ENCODE measurements at regions of chr1 and their contacts with region 1.

Region 1: DNA sequence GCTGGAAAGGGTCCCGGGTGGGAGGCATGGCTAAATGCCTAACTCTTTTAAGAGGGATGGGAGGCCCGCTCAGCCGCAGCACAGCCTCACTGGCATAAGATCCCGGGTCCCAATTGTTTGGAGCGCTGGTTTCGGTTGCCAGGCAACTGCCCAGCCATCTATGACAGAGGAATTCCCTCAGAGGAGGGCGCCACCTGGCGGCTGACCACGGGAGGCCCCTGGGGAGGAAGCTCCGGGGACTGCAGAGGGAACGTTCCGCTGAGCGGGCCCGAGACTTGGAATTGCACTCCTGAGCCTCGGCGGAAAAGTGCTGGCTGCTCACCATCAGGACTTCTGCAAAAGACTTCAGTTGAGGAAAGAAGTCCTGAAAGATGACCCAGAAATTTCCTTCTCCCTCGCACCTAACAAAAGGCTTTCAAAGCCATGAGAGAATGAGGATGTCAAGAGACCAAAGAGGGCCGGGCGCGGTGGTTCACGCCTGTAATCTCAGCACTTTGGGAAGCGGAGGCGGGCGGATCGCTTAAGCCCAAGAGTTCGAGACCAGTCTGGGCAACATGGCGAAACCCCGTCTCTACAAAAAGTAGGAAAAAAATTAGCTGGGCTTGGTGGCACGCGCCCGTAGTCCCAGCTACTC is 1.1 kb upstream of the ELAPOR1 start:
- DNase-seq: peak; percentile 96 to 99
- ATAC-seq: peak; percentile 95
- H3K4me3 ChIP-seq: no peak overlapping the region
- H3K27ac ChIP-seq: no peak overlapping the region
- H3K4me1 ChIP-seq: no peaks in the 10 kb centered on the region
- H3K27me3 ChIP-seq: no peaks in the 10 kb centered on the region

Region 2: GRCh38 chr1:108963052-108963686 is 149.6 kb before region 1 on chr1 and contains the start of gene CLCC1:
- intact Hi-C with region 1: loop called in 1 of 2 experiments (anchors 10 kb)
- DNase-seq: peak; percentile 96
- ATAC-seq: peak; percentile 98
- H3K4me3 ChIP-seq: peak within 1 kb of the TSS; percentile 66 to 86
- H3K27ac ChIP-seq: peak within 1 kb of the TSS; percentile 91 to 98
- H3K4me1 ChIP-seq: peaks cover 0 to 7% of the 10 kb centered on the region in 2 donors
- H3K27me3 ChIP-seq: no peaks in the 10 kb centered on the region
- total RNA-seq, gene CLCC1: 33.7 to 36.8 TPM

Region 3: GRCh38 chr1:109213785-109214468 is 101.2 kb after region 1 on chr1 and contains the start of gene SARS1:
- intact Hi-C with region 1: loop called in 1 of 2 experiments (anchors 5 kb)
- DNase-seq: peak; percentile 91 to 95
- ATAC-seq: peak; percentile 96
- H3K4me3 ChIP-seq: peak within 1 kb of the TSS; percentile 63 to 74
- H3K27ac ChIP-seq: peak within 1 kb of the TSS; percentile 4 to 72
- H3K4me1 ChIP-seq: peaks cover 0 to 9% of the 10 kb centered on the region in 2 donors
- H3K27me3 ChIP-seq: no peaks in the 10 kb centered on the region
- total RNA-seq, gene SARS1: 116 to 117 TPM